B cell (primary cell): ENCODE measurements at regions of chr1 and their contacts with region 1.

Region 1: DNA sequence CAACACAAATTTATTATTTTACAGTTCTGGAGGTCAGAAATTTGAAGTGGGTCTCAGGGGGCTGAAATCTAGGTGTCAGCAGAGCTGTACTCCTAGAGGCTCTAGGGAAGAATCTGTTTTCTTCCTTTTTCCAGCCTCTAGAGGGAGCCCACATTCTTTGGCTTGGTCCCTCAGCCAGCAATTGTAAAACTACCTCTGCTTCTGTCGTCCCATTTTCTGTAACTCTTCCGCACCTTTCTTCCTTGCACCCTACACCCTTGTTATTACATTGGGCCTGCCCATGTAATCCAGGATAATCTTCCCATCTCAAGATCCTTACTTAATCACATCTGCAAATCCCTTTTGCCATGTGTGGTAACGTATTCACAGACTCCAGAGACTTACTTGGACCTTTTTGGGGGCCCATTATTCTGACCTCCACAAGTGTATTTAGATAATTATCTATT is 24.8 kb upstream of the THEM4 start:
- DNase-seq: peak; percentile 78
- ATAC-seq: peak; percentile 76
- H3K4me3 ChIP-seq: no peak overlapping the region
- H3K4me3 Mint-ChIP-seq: no peak overlapping the region
- H3K27ac ChIP-seq: no peak overlapping the region
- H3K27ac Mint-ChIP-seq: no peak overlapping the region
- H3K4me1 ChIP-seq: peaks cover 0 to 2% of the 10 kb centered on the region in 2 donors
- H3K4me1 Mint-ChIP-seq: peaks cover 10% of the 10 kb centered on the region
- H3K27me3 ChIP-seq: peaks cover 0 to 3% (median 0%) of the 10 kb centered on the region in 4 experiments
- H3K27me3 Mint-ChIP-seq: peaks cover 12% of the 10 kb centered on the region
- CTCF ChIP-seq: peak; percentile 87

Region 2: GRCh38 chr1:151888972-151889570 is 45.0 kb before region 1 on chr1:
- CTCF ChIA-PET with region 1: interaction called, 15 read pairs
- POLR2A ChIA-PET with region 1: no interaction called
- intact Hi-C with region 1: loop called (anchors 5 kb)
- DNase-seq: peak; percentile 48
- ATAC-seq: no peak
- H3K4me3 ChIP-seq: no peak overlapping the region
- H3K4me3 Mint-ChIP-seq: no peak overlapping the region
- H3K27ac ChIP-seq: no peak overlapping the region
- H3K27ac Mint-ChIP-seq: no peak overlapping the region
- H3K4me1 ChIP-seq: peaks cover 6 to 8% of the 10 kb centered on the region in 2 donors
- H3K4me1 Mint-ChIP-seq: peaks cover 7% of the 10 kb centered on the region
- H3K27me3 ChIP-seq: no peaks in the 10 kb centered on the region
- H3K27me3 Mint-ChIP-seq: no peaks in the 10 kb centered on the region
- CTCF ChIP-seq: peak; percentile 68

Region 3: DNA sequence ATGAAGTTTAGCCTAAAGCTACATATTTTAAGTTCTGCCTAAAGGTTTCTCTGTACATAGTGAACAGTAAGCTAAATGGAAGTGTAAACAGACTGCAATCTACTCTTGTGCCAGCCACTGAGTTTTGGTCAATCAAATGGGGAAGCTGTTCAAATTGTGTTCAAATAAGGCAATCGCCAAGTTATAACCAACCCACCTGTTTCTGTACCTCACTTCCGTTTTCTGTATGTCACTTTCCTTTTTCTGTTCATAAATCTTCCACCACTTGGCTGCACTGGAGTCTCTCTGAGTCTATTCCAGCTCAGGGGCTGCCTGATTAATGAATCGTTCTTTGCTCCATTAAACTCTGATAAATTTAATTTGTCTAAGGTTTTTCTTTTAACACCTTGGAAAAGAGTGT is 13.9 kb before region 1 on chr1:
- CTCF ChIA-PET with region 1: interaction called, 31 read pairs
- POLR2A ChIA-PET with region 1: no interaction called
- intact Hi-C with region 1: no loop called
- DNase-seq: peak; percentile 72
- ATAC-seq: peak; percentile 46
- H3K4me3 ChIP-seq: peak overlapping the region in 1 of 5 experiments; percentile 24
- H3K4me3 Mint-ChIP-seq: peak overlapping the region; percentile 10
- H3K27ac ChIP-seq: peak overlapping the region; percentile 18 to 74
- H3K27ac Mint-ChIP-seq: peak overlapping the region; percentile 90
- H3K4me1 ChIP-seq: peaks cover 23 to 39% of the 10 kb centered on the region in 2 donors
- H3K4me1 Mint-ChIP-seq: peaks cover 31% of the 10 kb centered on the region
- H3K27me3 ChIP-seq: no peaks in the 10 kb centered on the region
- H3K27me3 Mint-ChIP-seq: no peaks in the 10 kb centered on the region
- CTCF ChIP-seq: no peak

Region 4: GRCh38 chr1:151968058-151968457 is 34.0 kb after region 1 on chr1:
- CTCF ChIA-PET with region 1: interaction called, 29 read pairs
- POLR2A ChIA-PET with region 1: no interaction called
- intact Hi-C with region 1: loop called (anchors 1 kb)
- DNase-seq: peak; percentile 76
- ATAC-seq: peak; percentile 78
- H3K4me3 ChIP-seq: no peak overlapping the region
- H3K4me3 Mint-ChIP-seq: no peak overlapping the region
- H3K27ac ChIP-seq: no peak overlapping the region
- H3K27ac Mint-ChIP-seq: no peak overlapping the region
- H3K4me1 ChIP-seq: peaks cover 0 to 7% of the 10 kb centered on the region in 2 donors
- H3K4me1 Mint-ChIP-seq: peaks cover 7% of the 10 kb centered on the region
- H3K27me3 ChIP-seq: peaks cover 0 to 7% (median 4%) of the 10 kb centered on the region in 4 experiments
- H3K27me3 Mint-ChIP-seq: peaks cover 18% of the 10 kb centered on the region
- CTCF ChIP-seq: peak; percentile 79

Region 5: GRCh38 chr1:151993654-151994496 is 59.8 kb after region 1 on chr1 and contains the start of gene S100A10:
- CTCF ChIA-PET with region 1: interaction called, 341 read pairs
- POLR2A ChIA-PET with region 1: interaction called, 3 read pairs
- intact Hi-C with region 1: loop called (anchors 1 kb)
- DNase-seq: peak; percentile 78
- ATAC-seq: peak; percentile 77
- H3K4me3 ChIP-seq: peak within 1 kb of the TSS; percentile 45 to 78 (median 67)
- H3K4me3 Mint-ChIP-seq: peak within 1 kb of the TSS; percentile 94
- H3K27ac ChIP-seq: peak within 1 kb of the TSS; percentile 51 to 73
- H3K27ac Mint-ChIP-seq: peak within 1 kb of the TSS; percentile 93
- H3K4me1 ChIP-seq: peaks cover 13 to 26% of the 10 kb centered on the region in 2 donors
- H3K4me1 Mint-ChIP-seq: peaks cover 30% of the 10 kb centered on the region
- H3K27me3 ChIP-seq: peaks cover 0 to 6% (median 2%) of the 10 kb centered on the region in 4 experiments
- H3K27me3 Mint-ChIP-seq: peaks cover 6% of the 10 kb centered on the region
- CTCF ChIP-seq: no peak
- total RNA-seq, gene S100A10: 40.4 and 47.1 TPM in 2 replicates